ENCODE measurements at regions of chr12 and their contacts with region 1.

Region 1: GRCh38 chr12:48189331-48190125 is 6.1 kb downstream of the CCDC184 start:
- DNase-seq: peak; percentile 78
- H3K4me3 Mint-ChIP-seq: no peak overlapping the region
- H3K27ac Mint-ChIP-seq: no peak overlapping the region
- H3K4me1 Mint-ChIP-seq: peaks cover 5% of the 10 kb centered on the region
- H3K27me3 Mint-ChIP-seq: peaks cover 67% of the 10 kb centered on the region
- CTCF ChIP-seq: peak; percentile 78

Region 2: DNA sequence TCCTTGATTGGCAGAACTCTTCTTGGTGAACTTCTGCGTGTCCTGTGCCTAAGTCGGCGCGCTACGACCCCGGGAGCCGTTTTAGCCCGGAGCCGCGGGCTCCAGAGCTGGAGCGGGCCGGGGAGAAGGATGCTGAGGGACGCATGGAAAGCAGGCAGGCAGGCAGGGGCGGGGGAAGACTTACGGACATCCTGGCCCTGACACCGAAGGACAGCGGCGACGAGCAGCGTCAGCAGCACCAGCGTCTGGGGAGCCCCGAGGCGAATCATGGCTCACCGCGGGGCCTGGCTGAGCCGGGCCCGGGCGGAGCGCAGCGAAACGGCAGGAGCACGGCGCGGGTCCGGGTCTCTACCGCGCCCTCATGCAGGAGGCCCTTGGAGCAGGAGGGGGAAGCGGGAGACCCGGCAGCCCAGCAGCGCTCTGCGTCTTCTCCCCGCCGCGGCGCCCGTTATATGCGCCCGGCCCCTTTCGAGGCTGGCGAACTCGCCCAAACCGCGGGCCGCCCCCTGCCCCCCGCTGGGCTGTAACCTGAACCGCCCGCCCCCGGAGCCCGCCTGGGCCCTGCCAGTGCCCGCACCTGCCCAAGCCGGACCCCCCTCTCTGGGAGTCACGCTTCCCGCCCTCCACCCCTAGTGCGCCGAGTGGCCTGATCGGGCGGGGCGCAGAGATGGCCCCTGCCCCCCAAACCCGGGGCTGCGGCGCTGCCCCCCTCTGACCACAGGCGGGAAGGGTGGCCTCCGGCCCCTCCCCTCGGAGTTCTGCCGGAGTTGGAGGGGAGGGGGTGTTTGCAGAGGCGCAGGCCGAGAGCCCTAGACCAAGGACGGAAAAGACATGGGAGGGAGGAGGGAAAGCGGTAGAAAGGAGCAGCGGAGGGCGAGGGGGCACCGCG is 185.2 kb before region 1 on chr12 and contains the start of gene COL2A1:
- CTCF ChIA-PET with region 1: no interaction called
- POLR2A ChIA-PET with region 1: no interaction called
- intact Hi-C with region 1: no loop called
- DNase-seq: no peak
- H3K4me3 Mint-ChIP-seq: no peak within 1 kb of the TSS
- H3K27ac Mint-ChIP-seq: no peak within 1 kb of the TSS
- H3K4me1 Mint-ChIP-seq: peaks cover 5% of the 10 kb centered on the region
- H3K27me3 Mint-ChIP-seq: peaks cover 76% of the 10 kb centered on the region
- CTCF ChIP-seq: no peak
- total RNA-seq, gene COL2A1: 0.12 TPM in 1 of 2 replicates, not detected in the other

Region 3: GRCh38 chr12:48175613-48176416 is 13.7 kb before region 1 on chr12:
- CTCF ChIA-PET with region 1: interaction called, 15 read pairs
- POLR2A ChIA-PET with region 1: interaction called, 3 read pairs
- intact Hi-C with region 1: no loop called
- DNase-seq: no peak
- H3K4me3 Mint-ChIP-seq: no peak overlapping the region
- H3K27ac Mint-ChIP-seq: no peak overlapping the region
- H3K4me1 Mint-ChIP-seq: peaks cover 11% of the 10 kb centered on the region
- H3K27me3 Mint-ChIP-seq: peaks cover 58% of the 10 kb centered on the region
- CTCF ChIP-seq: no peak

Region 4: DNA sequence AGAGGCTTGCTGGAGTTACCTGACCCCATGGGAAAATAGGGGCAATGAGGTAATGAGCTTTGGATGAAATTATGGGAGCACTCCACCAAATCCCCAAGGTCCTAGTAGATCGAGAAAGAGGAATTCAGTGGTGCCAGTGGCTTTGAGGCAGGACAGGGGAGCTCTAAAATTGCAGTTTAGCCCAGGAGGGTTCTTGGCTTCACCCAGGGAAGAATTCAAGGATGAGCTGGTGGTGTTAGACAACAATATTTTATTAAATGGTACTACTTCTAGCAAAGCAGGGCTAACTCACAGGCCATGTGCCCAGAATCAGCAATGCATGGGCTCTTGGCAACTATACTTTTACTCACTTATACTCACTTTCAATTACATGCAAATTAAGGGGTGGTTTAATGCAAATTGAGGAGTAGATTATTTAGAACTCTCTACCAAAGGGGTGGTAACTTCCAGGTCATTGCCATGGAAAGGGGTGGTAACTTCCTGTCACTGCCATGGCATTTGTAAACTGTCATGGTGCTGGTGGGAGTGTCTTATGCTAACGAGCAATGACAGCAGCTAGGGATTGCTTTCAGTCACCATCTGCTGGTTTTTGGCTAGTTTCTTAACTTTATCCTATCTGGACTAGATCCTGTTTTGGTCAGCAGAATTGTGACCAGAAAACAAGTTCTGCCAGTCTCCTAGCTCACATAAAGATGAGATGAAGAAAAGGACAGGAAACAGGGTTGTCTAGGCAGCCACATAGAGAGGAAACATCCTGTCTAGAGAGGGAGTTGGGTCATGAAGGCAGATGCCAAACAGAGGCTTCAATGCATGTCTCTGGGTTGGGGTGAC is 96.4 kb after region 1 on chr12:
- CTCF ChIA-PET with region 1: no interaction called
- POLR2A ChIA-PET with region 1: no interaction called
- intact Hi-C with region 1: no loop called
- DNase-seq: no peak
- H3K4me3 Mint-ChIP-seq: no peak overlapping the region
- H3K27ac Mint-ChIP-seq: no peak overlapping the region
- H3K4me1 Mint-ChIP-seq: no peaks in the 10 kb centered on the region
- H3K27me3 Mint-ChIP-seq: peaks cover 37% of the 10 kb centered on the region
- CTCF ChIP-seq: no peak

Region 5: GRCh38 chr12:48750769-48751735 is 561.5 kb after region 1 on chr12:
- CTCF ChIA-PET with region 1: no interaction called
- POLR2A ChIA-PET with region 1: no interaction called
- intact Hi-C with region 1: no loop called
- DNase-seq: no peak
- H3K4me3 Mint-ChIP-seq: no peak overlapping the region
- H3K27ac Mint-ChIP-seq: no peak overlapping the region
- H3K4me1 Mint-ChIP-seq: no peaks in the 10 kb centered on the region
- H3K27me3 Mint-ChIP-seq: peaks cover 10% of the 10 kb centered on the region
- CTCF ChIP-seq: no peak

Region 6: DNA sequence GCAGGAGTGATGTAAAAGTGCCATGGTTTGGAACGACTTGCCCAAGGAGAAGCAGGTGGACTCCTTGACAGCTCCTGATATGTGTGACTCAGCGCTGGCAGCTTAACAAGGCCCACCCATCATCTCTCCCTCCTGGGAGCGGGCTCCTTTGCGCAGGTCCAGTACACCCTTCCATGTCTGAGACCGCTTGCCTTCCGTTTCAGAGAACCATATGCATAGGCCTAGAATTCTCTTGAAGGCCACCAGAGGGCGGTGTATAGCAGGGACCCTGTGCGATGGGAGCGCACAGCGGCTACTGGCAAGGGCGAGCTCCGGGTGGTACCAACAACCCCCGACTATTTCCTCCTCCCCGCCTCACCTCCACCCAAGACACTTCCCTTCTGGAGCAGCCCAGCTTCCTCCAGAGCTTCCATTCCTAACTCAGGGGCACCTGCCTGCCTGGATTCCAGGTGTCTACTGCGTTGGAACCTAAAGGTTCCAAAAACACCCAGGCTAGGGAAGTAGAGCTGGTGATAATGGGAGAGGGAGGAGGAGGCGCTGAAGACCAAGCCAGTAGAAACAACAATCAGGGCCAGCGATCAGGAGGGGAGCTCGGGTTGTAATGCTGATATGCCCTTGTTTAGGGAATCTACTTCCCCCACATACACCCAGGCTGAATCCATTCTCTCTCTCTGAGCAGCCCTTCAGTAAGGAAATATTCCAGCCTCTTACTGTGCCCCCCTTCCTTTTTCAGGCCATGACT is 898.8 kb after region 1 on chr12:
- CTCF ChIA-PET with region 1: no interaction called
- POLR2A ChIA-PET with region 1: no interaction called
- intact Hi-C with region 1: no loop called
- DNase-seq: peak; percentile 93
- H3K4me3 Mint-ChIP-seq: no peak overlapping the region
- H3K27ac Mint-ChIP-seq: no peak overlapping the region
- H3K4me1 Mint-ChIP-seq: peaks cover 8% of the 10 kb centered on the region
- H3K27me3 Mint-ChIP-seq: no peaks in the 10 kb centered on the region
- CTCF ChIP-seq: peak; percentile 79